Naive thymus-derived CD4-positive, alpha-beta T cell (primary cell): ENCODE measurements at regions of chr11 and their contacts with region 1.

Region 1: GRCh38 chr11:105044921-105045524 is at the start of gene CARD16:
- DNase-seq: peak; percentile 8 to 57 (median 47)
- ATAC-seq: peak; percentile 91
- H3K4me3 ChIP-seq: peak within 1 kb of the TSS; percentile 62
- H3K4me3 Mint-ChIP-seq: peak within 1 kb of the TSS; percentile 89 to 100 (median 94)
- H3K27ac ChIP-seq: peak within 1 kb of the TSS; percentile 87
- H3K27ac Mint-ChIP-seq: peak within 1 kb of the TSS; percentile 94 to 100 (median 97)
- H3K4me1 ChIP-seq: peaks cover 19% of the 10 kb centered on the region in 2 donors
- H3K4me1 Mint-ChIP-seq: peaks cover 35 to 67% (median 48%) of the 10 kb centered on the region in 7 donors
- H3K27me3 ChIP-seq: no peaks in the 10 kb centered on the region
- H3K27me3 Mint-ChIP-seq: no peaks in the 10 kb centered on the region
- total RNA-seq, gene CARD16: 37.1 to 103 (median 42.4) TPM

Region 2: GRCh38 chr11:104968355-104968855 is 76.6 kb before region 1 on chr11 and contains the start of gene CASP4:
- CTCF ChIA-PET with region 1: no interaction called
- POLR2A ChIA-PET with region 1: interaction called, 3 read pairs
- intact Hi-C with region 1: loop called (anchors 1 to 2 kb)
- DNase-seq: peak in 7 of 9 donors; percentile 18 to 57 (median 48)
- ATAC-seq: peak; percentile 82
- H3K4me3 ChIP-seq: peak within 1 kb of the TSS; percentile 67
- H3K4me3 Mint-ChIP-seq: peak within 1 kb of the TSS; percentile 90 to 99 (median 96)
- H3K27ac ChIP-seq: peak within 1 kb of the TSS; percentile 89
- H3K27ac Mint-ChIP-seq: peak within 1 kb of the TSS; percentile 94 to 100 (median 97)
- H3K4me1 ChIP-seq: peaks cover 16 to 36% of the 10 kb centered on the region in 2 donors
- H3K4me1 Mint-ChIP-seq: peaks cover 35 to 47% (median 43%) of the 10 kb centered on the region in 7 donors
- H3K27me3 ChIP-seq: no peaks in the 10 kb centered on the region
- H3K27me3 Mint-ChIP-seq: no peaks in the 10 kb centered on the region
- total RNA-seq, gene CASP4: 60.7 to 94.7 (median 76.9) TPM

Region 3: DNA sequence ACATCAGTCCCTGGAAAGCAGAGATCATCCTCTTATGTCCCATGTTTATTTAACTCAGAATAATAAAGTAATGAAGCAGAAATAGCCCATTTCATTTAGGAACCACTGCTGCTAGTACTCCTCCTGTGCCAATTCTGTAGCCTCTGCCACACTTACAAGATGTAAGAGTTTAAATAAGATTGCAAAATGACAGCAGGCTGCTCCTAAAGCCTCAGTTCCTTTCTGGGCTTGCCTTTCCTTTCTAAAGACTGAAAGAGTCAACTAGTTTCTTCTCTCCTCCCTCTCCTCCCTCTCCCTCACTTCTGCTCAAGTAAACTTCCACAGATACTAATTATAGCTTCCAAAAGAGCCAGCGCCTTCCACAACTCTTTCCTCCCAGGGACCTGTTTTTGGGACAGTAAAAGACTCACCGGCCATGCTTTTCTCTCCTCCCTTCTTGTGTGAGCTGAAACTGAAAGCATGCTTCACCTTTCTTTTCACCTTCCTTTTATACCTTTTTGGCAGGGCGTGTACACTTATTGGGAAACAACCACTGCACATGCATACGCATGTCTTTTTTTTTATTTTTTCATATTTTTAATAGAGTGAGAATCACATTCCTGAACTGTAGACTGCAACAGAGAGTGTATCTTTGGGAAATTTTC is 26.2 kb after region 1 on chr11:
- CTCF ChIA-PET with region 1: no interaction called
- POLR2A ChIA-PET with region 1: no interaction called
- intact Hi-C with region 1: loop called in 1 of 2 experiments (anchors 1 kb)
- DNase-seq: peak in 6 of 9 donors; percentile 1 to 38 (median 28)
- ATAC-seq: peak; percentile 49
- H3K4me3 ChIP-seq: peak overlapping the region; percentile 18
- H3K4me3 Mint-ChIP-seq: peak overlapping the region; percentile 78 to 93 (median 84)
- H3K27ac ChIP-seq: peak overlapping the region; percentile 63
- H3K27ac Mint-ChIP-seq: peak overlapping the region; percentile 59 to 97 (median 84)
- H3K4me1 ChIP-seq: peaks cover 0 to 6% of the 10 kb centered on the region in 2 donors
- H3K4me1 Mint-ChIP-seq: peaks cover 14 to 38% (median 24%) of the 10 kb centered on the region in 7 donors
- H3K27me3 ChIP-seq: no peaks in the 10 kb centered on the region
- H3K27me3 Mint-ChIP-seq: peaks cover 0 to 3% (median 0%) of the 10 kb centered on the region in 5 donors

Region 4: GRCh38 chr11:105132716-105133511 is 87.9 kb after region 1 on chr11:
- CTCF ChIA-PET with region 1: no interaction called
- POLR2A ChIA-PET with region 1: no interaction called
- intact Hi-C with region 1: no loop called
- DNase-seq: no peak
- ATAC-seq: no peak
- H3K4me3 ChIP-seq: no peak overlapping the region
- H3K4me3 Mint-ChIP-seq: no peak overlapping the region
- H3K27ac ChIP-seq: no peak overlapping the region
- H3K27ac Mint-ChIP-seq: no peak overlapping the region
- H3K4me1 ChIP-seq: no peaks in the 10 kb centered on the region
- H3K4me1 Mint-ChIP-seq: no peaks in the 10 kb centered on the region
- H3K27me3 ChIP-seq: no peaks in the 10 kb centered on the region
- H3K27me3 Mint-ChIP-seq: peaks cover 0 to 10% (median 4%) of the 10 kb centered on the region in 5 donors

Region 5: DNA sequence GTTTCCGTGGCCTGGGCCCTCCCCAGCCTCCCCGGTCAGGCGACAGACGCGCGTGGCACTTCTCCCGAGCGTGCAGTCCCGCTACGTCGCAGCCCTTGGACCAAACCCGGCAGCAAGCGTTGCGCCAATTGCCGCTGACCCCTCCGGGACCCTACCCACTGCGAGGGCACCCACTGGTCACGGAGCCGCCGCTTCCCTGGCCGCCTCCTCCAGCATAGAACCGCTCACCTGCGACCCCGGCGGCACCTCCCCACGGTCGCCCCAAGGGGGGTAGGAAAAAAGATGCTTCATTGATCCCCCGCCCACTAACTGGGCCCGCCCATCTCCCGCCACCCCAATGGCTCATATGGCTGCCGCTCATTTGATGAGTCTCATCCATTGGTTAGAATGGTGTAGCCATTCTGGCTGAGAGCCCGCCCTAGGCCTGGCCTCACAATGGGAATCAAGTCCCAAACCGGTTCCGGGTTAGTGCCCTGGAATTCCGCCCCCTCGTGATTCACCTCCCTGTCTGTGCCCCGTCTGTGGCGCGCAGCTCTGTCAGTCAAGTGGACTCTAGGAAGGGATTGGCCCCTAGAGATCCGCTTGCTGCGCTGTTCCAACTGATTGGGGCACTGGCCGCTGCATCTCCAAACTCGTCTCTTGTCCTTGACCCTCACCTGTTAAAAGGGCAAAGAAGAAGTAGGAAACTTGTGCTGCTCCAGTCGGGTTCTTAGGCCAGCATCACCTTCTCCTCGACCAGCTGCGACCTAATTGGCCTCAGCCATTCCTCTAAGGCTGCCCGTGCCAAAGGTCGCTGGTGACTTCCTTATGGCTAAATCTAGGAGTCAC is 977.2 kb after region 1 on chr11 and contains the start of gene MSANTD4:
- CTCF ChIA-PET with region 1: no interaction called
- POLR2A ChIA-PET with region 1: no interaction called
- intact Hi-C with region 1: loop called in 1 of 2 experiments (anchors 5 kb)
- DNase-seq: peak; percentile 89 to 97 (median 95)
- ATAC-seq: peak; percentile 98
- H3K4me3 ChIP-seq: peak within 1 kb of the TSS; percentile 82
- H3K4me3 Mint-ChIP-seq: peak within 1 kb of the TSS; percentile 91 to 99 (median 94)
- H3K27ac ChIP-seq: peak within 1 kb of the TSS; percentile 66
- H3K27ac Mint-ChIP-seq: peak within 1 kb of the TSS; percentile 82 to 96 (median 89)
- H3K4me1 ChIP-seq: peaks cover 10 to 20% of the 10 kb centered on the region in 2 donors
- H3K4me1 Mint-ChIP-seq: peaks cover 34 to 60% (median 49%) of the 10 kb centered on the region in 7 donors
- H3K27me3 ChIP-seq: no peaks in the 10 kb centered on the region
- H3K27me3 Mint-ChIP-seq: peaks cover 0 to 13% (median 6%) of the 10 kb centered on the region in 5 donors
- total RNA-seq, gene MSANTD4: 4.7 to 18.7 (median 15.3) TPM